Activated CD4-positive, alpha-beta T cell treated with anti-CD3 and anti-CD28 coated beads, Interleukin-2, amount 10 ng/mL, durations not matched to agents 24 days and 14 days (primary cell): ENCODE measurements at regions of chr4 and their contacts with region 1.

Region 1: DNA sequence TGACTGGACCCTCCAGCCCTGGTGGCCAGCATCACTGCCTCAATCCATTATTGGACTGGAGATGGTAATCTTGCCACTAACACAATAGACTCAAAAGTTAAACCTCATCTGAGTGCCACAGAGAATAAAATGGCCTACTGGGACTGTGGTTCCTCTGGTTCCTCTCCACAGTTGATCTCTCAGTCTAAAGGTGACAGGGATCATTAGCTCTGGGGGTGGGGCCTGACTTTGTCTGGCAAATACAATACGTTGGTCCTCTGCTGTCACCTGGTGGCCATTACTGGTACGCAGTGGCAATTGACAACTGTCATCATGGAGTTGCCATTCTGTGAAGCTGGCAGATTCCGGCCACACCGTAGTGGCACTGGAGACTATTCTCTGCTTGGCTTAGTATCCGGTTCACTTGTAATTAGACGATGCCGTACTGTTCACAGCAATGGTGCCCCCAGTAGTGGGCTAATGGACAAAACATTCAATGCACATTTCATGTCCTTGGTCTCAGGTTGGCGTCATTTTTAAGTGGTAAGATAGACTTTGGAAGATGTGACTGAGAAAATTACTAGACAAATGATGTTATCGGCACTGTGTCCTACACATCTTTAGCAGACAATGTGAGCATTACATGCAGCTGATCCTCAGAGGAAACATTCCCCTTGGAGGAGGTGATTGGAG is 6.7 kb downstream of the FGFBP2 start:
- DNase-seq: peak; percentile 93
- H3K4me3 Mint-ChIP-seq: no peak overlapping the region
- H3K27ac Mint-ChIP-seq: no peak overlapping the region
- H3K4me1 Mint-ChIP-seq: peaks cover 2% of the 10 kb centered on the region
- H3K27me3 Mint-ChIP-seq: peaks cover 5% of the 10 kb centered on the region

Region 2: GRCh38 chr4:15231265-15232091 is 724.8 kb before region 1 on chr4:
- intact Hi-C with region 1: loop called (anchors 1 kb)
- DNase-seq: peak; percentile 91
- H3K4me3 Mint-ChIP-seq: no peak overlapping the region
- H3K27ac Mint-ChIP-seq: no peak overlapping the region
- H3K4me1 Mint-ChIP-seq: peaks cover 24% of the 10 kb centered on the region
- H3K27me3 Mint-ChIP-seq: peaks cover 1% of the 10 kb centered on the region

Region 3: DNA sequence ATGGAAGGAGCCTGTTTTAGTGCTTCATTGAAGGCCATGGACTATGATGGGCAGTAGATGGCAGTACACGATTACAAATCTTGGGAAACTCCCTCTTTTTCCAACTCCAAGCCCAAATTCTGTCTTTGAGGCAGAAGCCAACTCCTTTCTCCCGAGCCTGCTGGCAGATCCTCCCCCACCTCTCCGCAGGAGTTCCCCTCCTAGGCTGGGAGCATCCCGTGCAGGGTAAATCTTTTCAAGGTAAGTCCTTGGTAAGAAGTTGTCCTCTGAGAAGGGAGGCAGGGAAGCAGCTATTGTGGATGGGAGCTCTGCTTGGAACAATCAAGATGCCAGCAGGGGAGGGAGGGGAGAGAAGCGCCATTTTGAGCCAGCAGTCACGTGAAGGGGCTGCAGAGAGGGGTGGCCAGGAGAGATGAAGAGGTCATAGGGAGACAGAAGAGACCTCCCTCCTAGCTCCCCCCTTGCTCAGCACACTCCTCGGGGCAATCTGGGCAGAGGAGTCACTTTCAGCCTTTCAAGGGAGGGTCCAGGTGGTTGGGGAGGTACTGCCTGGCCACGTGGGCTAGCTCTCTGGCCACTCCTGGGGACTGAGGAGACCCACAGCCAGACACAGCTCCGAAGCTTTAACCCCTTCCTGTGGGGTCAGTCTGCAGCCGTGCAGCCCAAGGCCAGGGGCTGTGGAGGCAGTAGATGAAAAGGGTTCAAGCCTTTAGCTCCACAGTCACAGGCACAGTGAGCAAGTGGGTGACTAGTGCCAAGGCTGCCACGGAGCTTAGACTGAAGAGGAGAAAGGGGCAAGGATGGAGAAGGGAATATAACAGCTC is 477.0 kb before region 1 on chr4:
- intact Hi-C with region 1: loop called (anchors 10 kb)
- DNase-seq: peak; percentile 63
- H3K4me3 Mint-ChIP-seq: no peak overlapping the region
- H3K27ac Mint-ChIP-seq: no peak overlapping the region
- H3K4me1 Mint-ChIP-seq: no peaks in the 10 kb centered on the region
- H3K27me3 Mint-ChIP-seq: peaks cover 4% of the 10 kb centered on the region

Region 4: DNA sequence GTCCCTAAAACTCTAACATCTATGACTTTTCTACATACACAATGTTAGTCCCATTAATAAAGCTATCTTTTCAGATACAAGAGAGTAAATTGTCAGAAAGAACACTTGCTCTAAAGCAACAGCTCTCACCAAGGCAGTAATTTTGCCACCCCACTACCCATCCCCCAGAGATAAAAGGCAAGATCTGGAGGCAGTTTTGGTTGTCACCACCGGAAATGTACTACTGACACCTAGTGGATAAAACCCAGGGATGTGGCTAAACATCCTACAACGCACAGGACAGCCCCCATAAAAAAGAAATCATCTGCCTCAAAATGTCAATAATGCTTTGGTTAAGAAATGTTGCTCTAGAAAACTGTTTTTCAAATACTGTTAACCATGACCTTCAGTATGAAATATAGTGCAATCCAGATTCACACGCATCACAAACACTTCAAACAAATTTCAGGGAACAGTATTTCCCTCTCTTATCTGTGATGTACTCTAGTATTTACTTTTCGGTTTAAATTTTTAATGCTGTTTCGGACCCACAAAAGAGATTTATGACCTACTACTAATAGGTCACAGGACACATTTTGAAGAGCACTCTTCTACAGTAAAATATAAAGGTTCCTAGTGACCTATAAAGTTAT is 306.3 kb before region 1 on chr4:
- intact Hi-C with region 1: loop called (anchors 5 kb)
- DNase-seq: peak; percentile 90
- H3K4me3 Mint-ChIP-seq: peak overlapping the region; percentile 63
- H3K27ac Mint-ChIP-seq: peak overlapping the region; percentile 69
- H3K4me1 Mint-ChIP-seq: peaks cover 42% of the 10 kb centered on the region
- H3K27me3 Mint-ChIP-seq: no peaks in the 10 kb centered on the region

Region 5: DNA sequence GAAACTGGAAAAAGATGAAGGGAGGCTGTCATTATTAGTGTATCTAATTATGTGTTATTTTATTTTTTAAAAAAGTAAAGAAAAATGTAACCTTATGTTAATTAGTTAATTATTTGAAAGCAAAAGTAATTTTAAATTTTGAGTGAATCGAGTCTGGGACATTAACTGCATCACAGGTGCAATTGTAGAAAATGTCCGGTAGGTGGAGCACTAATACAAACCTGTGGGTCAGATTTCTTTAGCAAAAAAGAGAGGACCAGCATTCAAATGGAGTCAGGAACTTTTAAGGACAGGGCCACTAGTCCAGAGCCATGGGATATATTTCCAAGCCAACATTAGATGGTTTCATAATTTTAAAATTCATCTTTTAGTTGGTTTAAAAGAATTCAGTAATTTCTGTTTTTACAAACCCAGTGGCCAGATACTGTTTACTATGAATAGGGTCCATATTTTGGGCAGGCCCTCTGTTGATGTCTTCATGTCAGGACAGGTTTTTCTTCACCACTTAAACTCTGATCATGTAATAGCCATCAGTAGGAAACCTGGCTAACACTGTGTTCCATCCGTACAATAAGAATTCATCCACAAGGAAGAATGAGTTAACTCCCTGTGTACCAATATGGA is 226.3 kb before region 1 on chr4:
- intact Hi-C with region 1: loop called (anchors 1 kb)
- DNase-seq: peak; percentile 81
- H3K4me3 Mint-ChIP-seq: no peak overlapping the region
- H3K27ac Mint-ChIP-seq: no peak overlapping the region
- H3K4me1 Mint-ChIP-seq: peaks cover 21% of the 10 kb centered on the region
- H3K27me3 Mint-ChIP-seq: peaks cover 2% of the 10 kb centered on the region

Region 6: GRCh38 chr4:15805583-15806517 is 150.5 kb before region 1 on chr4:
- intact Hi-C with region 1: loop called (anchors 1 kb)
- DNase-seq: peak; percentile 81
- H3K4me3 Mint-ChIP-seq: no peak overlapping the region
- H3K27ac Mint-ChIP-seq: peak overlapping the region; percentile 23
- H3K4me1 Mint-ChIP-seq: peaks cover 46% of the 10 kb centered on the region
- H3K27me3 Mint-ChIP-seq: no peaks in the 10 kb centered on the region

Region 7: DNA sequence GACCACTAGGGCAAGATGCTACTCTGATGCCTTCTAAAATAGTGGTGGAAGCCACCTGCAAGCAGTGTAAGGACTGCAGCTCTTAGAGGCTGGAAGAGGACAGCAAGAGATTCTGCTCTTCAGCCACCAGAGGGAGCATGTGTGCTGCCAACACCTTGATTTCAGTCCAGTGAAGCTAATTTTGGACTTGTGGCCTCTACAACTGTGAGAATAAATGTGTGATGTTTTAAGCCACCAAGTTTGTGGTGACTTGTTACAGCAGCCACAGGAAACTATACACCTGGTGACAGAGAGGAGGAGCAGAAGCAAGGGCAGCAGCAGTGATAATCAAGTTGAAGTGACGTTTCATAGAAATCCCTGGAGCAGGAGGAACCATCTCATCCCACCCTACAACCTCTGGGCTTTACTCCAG is 73.6 kb before region 1 on chr4:
- intact Hi-C with region 1: loop called (anchors 1 kb)
- DNase-seq: peak; percentile 81
- H3K4me3 Mint-ChIP-seq: no peak overlapping the region
- H3K27ac Mint-ChIP-seq: no peak overlapping the region
- H3K4me1 Mint-ChIP-seq: no peaks in the 10 kb centered on the region
- H3K27me3 Mint-ChIP-seq: peaks cover 17% of the 10 kb centered on the region